GM18951 (cell line): ENCODE measurements at regions of chr12 and their contacts with region 1.

Region 1: DNA sequence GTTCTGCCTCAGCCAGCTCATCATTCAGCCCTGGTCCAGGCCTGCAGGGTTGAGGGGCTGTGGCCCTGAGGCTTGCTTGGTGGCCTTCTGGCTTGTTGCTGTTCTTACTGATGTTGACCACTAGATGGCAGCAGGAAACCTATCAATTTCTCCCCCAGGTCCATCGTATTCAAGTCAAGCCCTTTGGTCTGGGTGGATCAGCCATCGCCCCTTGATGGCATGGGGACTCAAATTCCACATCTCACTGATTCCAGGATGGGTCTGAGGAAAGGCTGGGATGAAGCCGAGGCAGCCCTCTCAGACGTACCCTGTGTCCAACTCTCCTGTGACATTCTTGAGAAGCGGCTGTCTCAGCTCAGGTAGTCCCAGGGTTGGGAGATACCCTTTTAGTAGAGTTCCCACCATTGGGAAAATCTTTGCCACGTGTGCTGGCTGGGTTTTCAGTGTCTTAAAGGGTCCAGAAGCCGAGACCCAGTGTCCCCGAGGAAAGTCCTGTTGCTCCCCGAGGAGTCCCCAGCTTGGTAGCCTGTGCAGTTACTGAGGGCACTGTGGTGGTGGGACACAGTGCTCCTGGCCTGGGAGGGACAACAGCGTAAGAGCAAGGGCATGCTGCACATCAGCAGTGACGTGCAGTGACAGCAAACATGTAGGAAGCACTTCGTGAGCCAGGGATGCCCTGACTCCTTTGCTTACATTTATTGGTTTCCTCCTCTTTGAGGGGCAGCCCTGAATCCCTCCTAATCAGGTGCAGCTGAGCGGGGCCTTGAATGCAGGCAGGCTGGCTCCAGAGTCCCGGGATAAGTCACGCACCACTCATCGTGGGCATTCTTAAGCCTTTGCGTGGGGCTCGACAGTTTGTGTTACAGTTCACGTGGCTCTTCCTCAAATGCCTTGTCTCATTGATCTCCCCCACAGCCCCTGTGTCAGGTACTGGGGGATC is 58.6 kb downstream of the TSPAN9 start:
- POLR2A ChIP-seq: no peak

Region 2: DNA sequence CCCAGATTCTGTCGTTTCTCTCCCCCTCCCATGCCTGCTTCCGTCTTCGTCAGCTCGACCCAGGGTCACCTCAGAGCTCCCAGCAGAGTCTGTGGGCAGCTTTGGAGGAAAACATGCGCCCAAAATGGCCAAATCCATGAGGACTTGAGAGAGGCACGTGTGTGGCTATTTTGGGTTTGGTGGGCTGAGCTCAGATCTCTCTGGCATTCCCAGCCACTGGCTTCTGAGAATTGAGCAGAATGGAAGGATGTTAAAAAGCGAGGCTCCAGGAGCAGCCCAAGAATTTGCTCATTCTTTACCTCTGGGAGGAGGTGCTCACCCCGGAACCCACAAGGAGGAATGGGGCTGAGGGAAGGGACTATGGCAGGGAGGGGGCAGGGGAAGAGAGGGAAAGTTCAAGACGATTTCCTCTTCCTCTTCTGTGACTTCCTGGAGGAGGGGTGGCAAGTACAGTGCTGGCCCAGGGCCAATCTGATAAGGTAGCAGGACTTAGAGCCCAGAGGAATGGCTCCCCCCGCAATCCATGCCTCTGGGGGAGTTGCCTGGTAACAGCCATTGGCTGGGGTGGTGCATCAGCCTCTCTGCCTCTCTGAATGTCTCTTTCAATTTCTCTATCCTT is 38.5 kb before region 1 on chr12:
- in situ Hi-C with region 1: no loop called
- POLR2A ChIP-seq: no peak

Region 3: GRCh38 chr12:3202734-3203446 is 67.1 kb after region 1 on chr12:
- in situ Hi-C with region 1: loop called (anchors 10 kb)
- POLR2A ChIP-seq: no peak

Region 4: GRCh38 chr12:3275171-3276041 is 139.6 kb after region 1 on chr12:
- in situ Hi-C with region 1: loop called (anchors 10 kb)
- POLR2A ChIP-seq: no peak